ENCODE measurements at regions of chr15 and their contacts with region 1.

Region 1: GRCh38 chr15:85485956-85486567 is 105.7 kb downstream of the AKAP13 start:
- DNase-seq: peak; percentile 25 to 45
- ATAC-seq: peak; percentile 87 to 94
- H3K4me3 ChIP-seq: no peak overlapping the region
- H3K27ac ChIP-seq: no peak overlapping the region
- H3K4me1 ChIP-seq: peaks cover 0 to 19% of the 10 kb centered on the region in 2 donors
- H3K27me3 ChIP-seq: no peaks in the 10 kb centered on the region
- CTCF ChIP-seq: peak; percentile 55 to 91 (median 78)
- POLR2A ChIP-seq: no peak

Region 2: DNA sequence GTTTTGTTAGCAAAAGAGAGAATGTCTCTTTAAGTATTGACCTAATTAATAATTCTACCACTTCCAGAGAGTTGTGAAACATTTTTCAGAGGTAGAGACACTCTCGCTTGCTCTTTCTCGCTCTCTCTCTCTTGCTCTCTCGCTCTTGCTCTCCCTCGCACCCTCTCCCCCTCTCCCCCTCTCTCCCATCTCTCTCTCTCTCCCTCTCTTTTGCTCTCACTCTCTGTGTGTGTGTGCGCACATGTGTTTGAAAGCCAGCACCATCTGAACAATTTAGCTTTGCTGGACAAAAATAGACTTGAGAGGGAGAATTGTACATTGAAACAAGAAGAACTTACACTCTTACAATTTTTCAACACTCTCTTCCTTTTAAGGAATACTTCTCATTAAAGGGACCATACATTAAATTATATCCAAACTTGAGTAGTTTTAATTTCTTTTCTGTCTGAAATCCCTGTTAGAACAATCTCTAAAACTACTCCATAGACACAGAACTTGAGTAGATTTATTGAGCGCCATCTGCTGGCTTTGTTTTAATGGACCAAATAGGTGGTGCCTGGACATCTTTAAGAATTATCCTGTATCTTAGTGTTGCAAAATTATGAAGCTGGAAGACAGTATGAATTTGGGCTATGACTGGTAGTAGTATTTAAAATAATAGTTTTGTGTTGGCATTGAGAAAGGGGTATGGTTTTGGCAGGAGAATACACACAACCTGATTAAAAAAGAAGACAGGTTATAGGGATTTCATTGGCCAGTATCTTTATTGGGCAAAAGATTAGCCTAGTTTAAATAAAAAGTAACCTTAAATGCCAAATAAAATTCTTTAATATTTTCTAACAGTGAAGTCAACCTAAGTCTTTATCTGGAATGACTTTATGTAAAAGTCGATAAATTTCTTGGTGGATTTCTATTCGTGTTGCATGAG is 19.0 kb after region 1 on chr15:
- in situ Hi-C with region 1: no loop called
- intact Hi-C with region 1: loop called (anchors 1 kb)
- DNase-seq: peak; percentile 6 to 20
- ATAC-seq: peak in 1 of 2 donors; percentile 65
- H3K4me3 ChIP-seq: no peak overlapping the region
- H3K27ac ChIP-seq: peak overlapping the region; percentile 27 to 49 (median 29)
- H3K4me1 ChIP-seq: peaks cover 18 to 23% of the 10 kb centered on the region in 2 donors
- H3K27me3 ChIP-seq: no peaks in the 10 kb centered on the region
- CTCF ChIP-seq: peak in 3 of 5 experiments; percentile 40 to 58 (median 53)
- POLR2A ChIP-seq: no peak

Region 3: DNA sequence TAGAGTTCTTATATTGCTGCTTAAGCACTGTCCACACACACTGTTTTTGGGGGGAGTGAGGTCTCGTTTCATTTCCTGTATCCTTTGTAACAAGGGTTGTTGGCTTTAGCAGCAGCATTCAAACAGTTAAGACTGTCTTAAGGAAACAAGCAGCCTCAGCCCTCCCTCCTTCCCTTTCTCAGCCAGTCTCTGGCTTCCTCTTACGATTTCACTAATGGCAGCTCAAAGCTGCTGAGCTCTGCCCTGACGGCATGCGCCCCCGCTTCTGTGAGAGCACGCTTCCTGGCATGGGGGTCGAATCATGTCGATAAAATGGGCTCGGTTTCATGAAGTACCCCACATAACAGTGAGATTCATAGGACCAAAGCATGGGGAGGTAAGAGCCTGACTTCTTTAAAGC is 203.7 kb after region 1 on chr15:
- in situ Hi-C with region 1: loop called in 1 of 4 experiments (anchors 25 kb)
- intact Hi-C with region 1: no loop called
- DNase-seq: no peak
- ATAC-seq: peak; percentile 38 to 54
- H3K4me3 ChIP-seq: peak overlapping the region in 2 of 4 donors; percentile 3 to 34
- H3K27ac ChIP-seq: peak overlapping the region; percentile 46 to 53 (median 50)
- H3K4me1 ChIP-seq: peaks cover 0 to 29% of the 10 kb centered on the region in 2 donors
- H3K27me3 ChIP-seq: no peaks in the 10 kb centered on the region
- CTCF ChIP-seq: no peak
- POLR2A ChIP-seq: no peak

Region 4: GRCh38 chr15:85707519-85708338 is 221.7 kb after region 1 on chr15:
- in situ Hi-C with region 1: loop called in 1 of 4 experiments (anchors 25 kb)
- intact Hi-C with region 1: loop called (anchors 5 kb)
- DNase-seq: peak in 1 of 2 donors; percentile 56
- ATAC-seq: peak; percentile 76 to 84
- H3K4me3 ChIP-seq: peak overlapping the region; percentile 24 to 40 (median 29)
- H3K27ac ChIP-seq: peak overlapping the region; percentile 82 to 86 (median 84)
- H3K4me1 ChIP-seq: peaks cover 63% of the 10 kb centered on the region in 2 donors
- H3K27me3 ChIP-seq: no peaks in the 10 kb centered on the region
- CTCF ChIP-seq: peak in 1 of 5 experiments; percentile 9
- POLR2A ChIP-seq: peak in 1 of 2 donors; percentile 47